Uterus (tissue), 4 donors: ENCODE measurements at regions of chr1 and their contacts with region 1.

Region 1: DNA sequence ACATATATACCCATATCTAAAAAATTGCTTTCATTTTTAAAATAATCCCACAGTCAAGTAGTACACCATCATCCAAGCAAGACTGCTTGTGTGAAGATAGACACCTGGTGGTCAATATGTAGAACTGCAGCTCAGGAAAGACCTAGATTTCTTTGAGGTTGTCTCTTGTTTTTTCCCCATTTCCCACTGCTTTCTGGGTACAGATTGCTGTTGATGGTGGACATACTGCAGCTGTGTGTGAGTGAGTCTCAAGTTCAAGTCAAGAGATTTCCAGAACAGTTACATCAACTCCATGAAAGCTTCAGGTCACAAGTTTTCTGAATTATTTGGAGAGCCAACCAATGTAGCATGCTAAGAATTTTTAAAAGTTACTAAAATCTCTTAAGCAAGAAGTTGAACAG is 306.4 kb downstream of the DUSP10 start:
- DNase-seq: no peak
- H3K4me3 ChIP-seq: no peak overlapping the region
- H3K27ac ChIP-seq: no peak overlapping the region
- H3K4me1 ChIP-seq: no peaks in the 10 kb centered on the region
- H3K27me3 ChIP-seq: no peaks in the 10 kb centered on the region
- CTCF ChIP-seq: peak; percentile 79 to 98 (median 90)
- POLR2A ChIP-seq: no peak

Region 2: GRCh38 chr1:220879076-220879508 is 556.4 kb before region 1 on chr1 and contains the start of gene HLX:
- intact Hi-C with region 1: loop called (anchors 10 kb)
- DNase-seq: peak; percentile 84 to 86
- H3K4me3 ChIP-seq: peak within 1 kb of the TSS; percentile 39 to 84
- H3K27ac ChIP-seq: peak within 1 kb of the TSS; percentile 89 to 92
- H3K4me1 ChIP-seq: peaks cover 0 to 9% of the 10 kb centered on the region in 2 donors
- H3K27me3 ChIP-seq: peaks cover 0 to 14% of the 10 kb centered on the region in 2 donors
- CTCF ChIP-seq: peak in 1 of 4 experiments; percentile 3
- POLR2A ChIP-seq: peak; percentile 49 to 60
- total RNA-seq, gene HLX: 0.26 to 35.9 (median 7.0) TPM

Region 3: DNA sequence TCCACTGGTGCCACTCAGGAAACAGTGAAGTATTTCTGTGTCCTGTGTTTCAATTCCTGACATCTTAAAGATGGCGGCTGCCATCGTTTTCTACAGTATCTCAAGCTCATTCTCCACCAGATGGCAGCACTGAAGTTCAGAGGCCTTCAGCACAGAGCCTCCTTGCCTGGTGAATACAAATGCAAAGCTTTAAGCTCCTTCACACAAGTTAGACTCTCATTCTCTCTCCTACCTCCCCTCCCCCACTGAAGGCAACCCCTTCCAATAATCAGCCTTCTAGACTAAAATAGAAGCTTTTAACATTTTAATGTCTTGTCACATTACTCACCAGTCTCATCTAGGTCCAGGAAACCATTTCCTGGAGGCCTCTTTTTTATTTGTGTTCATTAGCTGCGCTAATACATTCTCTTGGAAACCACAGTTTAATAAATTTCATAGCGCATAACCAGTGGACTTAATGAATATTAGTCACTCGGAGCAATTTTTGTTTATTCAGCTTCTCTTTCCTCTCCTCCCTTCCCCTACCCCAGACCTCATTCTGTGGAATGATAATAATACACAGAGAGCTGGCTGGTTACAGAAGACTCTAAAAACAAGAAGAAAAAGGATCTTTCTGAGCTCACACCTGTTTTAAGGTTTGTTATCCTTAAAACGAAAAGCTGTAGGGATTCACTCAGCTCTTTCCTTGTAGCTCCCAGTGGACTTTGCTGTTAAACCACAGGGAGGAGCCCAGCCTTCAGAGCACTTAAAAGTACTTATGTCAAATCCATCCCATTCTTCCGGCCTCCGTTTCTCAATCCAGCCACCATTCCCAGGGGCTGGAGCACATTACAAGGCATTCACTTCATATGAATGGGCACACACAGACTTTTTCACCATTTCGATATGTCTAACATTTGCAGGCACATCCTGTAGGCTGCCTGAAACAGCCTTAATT is 171.4 kb before region 1 on chr1:
- intact Hi-C with region 1: loop called (anchors 10 kb)
- DNase-seq: peak in 1 of 2 donors; percentile 59
- H3K4me3 ChIP-seq: no peak overlapping the region
- H3K27ac ChIP-seq: no peak overlapping the region
- H3K4me1 ChIP-seq: no peaks in the 10 kb centered on the region
- H3K27me3 ChIP-seq: no peaks in the 10 kb centered on the region
- CTCF ChIP-seq: peak; percentile 35 to 57 (median 46)
- POLR2A ChIP-seq: no peak